Dendritic cell treated with granulocyte-macrophage colony-stimulating factor and Interleukin-4, amounts not matched to agents 40 ng/mL and 50 ng/mL, for 4 days (primary cell): ENCODE measurements at regions of chr21 and their contacts with region 1.

Region 1: GRCh38 chr21:39094847-39095579 is 88.2 kb downstream of the PSMG1 start:
- H3K4me3 Mint-ChIP-seq: peak overlapping the region; percentile 39
- H3K27ac Mint-ChIP-seq: peak overlapping the region; percentile 94
- H3K4me1 Mint-ChIP-seq: peaks cover 89% of the 10 kb centered on the region
- H3K27me3 Mint-ChIP-seq: peaks cover 5% of the 10 kb centered on the region

Region 2: DNA sequence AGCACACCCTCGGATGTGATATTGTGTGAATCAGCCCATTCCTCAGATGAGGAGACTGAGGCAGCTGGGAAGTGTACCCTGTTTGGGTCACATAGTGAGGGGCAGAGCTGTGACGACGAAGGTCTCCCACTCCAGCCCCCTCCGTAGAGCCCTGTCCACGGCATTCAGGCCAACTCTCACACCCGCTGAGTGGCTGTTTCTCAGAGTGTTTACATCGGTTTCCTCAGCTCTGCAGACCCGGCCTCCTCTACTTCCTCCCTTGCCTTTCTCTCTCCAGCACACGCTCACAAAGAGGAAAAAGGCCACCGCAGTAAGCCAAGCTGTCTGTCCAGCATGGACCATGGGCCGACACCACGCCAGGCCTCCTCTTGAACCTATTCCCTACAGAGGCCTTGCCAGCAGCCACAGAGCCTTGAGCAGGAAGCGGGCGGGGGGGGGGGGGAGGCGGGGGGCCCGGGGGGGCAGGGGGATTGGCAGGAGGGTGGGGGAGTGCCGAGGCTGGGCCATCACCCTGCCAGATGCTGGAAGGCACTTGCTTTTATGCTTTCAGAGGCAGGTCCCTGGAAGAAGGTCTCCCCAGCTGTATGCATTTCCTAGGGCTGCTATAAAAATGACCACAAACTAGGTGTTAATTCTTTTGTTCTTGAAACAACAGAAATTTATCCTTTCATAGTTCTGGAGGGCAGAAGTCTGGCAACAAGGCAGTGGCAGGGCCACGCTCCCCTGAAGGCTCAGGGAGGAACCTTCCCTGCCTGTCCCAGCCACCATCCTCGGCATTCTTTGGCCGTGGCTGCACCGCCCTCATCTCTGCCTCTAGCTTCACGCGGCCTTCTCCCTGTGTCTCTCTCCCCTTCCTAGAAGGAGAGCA is 90.1 kb before region 1 on chr21:
- intact Hi-C with region 1: loop called (anchors 5 kb)
- H3K4me3 Mint-ChIP-seq: peak overlapping the region; percentile 42
- H3K27ac Mint-ChIP-seq: peak overlapping the region; percentile 86
- H3K4me1 Mint-ChIP-seq: peaks cover 88% of the 10 kb centered on the region
- H3K27me3 Mint-ChIP-seq: peaks cover 18% of the 10 kb centered on the region

Region 3: DNA sequence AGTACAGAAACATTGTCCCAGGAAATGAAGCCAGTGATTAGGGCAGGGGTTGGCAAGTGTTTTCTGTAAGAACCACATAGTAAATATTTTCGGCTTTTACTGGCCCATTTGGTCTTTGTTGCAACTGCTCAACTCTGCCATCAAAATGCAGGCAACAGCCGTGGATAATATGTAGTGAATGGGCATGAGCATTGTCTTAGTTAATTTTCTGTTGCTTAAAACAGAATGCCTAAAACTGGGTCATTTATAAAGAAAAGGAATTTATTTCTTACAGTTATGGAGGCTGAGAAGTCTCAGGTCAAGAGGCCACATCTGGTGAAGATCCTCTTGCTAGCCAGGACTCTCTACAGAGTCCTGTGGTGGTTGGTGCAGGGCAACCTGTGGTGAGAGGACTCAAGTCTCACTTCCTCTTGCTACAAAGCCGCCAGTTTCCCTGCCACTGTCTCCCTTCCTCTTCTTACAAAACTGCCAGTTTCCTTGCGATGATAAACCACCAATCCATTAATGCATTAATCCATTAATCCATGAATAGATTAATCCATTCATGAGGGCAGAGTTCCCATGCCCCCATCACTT is 78.2 kb before region 1 on chr21:
- intact Hi-C with region 1: loop called (anchors 5 kb)
- H3K4me3 Mint-ChIP-seq: no peak overlapping the region
- H3K27ac Mint-ChIP-seq: no peak overlapping the region
- H3K4me1 Mint-ChIP-seq: peaks cover 33% of the 10 kb centered on the region
- H3K27me3 Mint-ChIP-seq: peaks cover 27% of the 10 kb centered on the region